ENCODE measurements at regions of chr6 and their contacts with region 1.

Region 1: DNA sequence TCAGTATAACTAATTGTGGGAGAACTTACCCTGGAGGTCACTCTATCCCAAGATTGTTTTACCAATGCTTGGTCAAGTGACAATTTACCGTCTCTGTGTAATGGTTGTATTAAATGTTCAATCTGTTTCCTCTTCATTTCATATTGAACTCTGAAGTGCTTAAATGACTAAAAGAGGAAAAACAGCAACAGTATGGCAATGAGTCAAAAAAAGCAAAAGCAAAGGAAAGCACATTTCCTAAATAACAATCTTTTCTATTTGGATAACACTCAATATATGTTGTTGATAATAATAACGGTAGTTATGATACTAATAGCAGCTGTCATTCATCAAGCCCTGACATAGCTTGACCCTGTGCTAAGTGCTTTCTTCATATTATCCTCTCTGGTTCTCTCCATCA is 152.4 kb downstream of the SYNE1 start:
- DNase-seq: no peak
- ATAC-seq: no peak
- H3K4me3 ChIP-seq: no peak overlapping the region
- H3K27ac ChIP-seq: no peak overlapping the region
- H3K4me1 ChIP-seq: no peaks in the 10 kb centered on the region
- H3K27me3 ChIP-seq: no peaks in the 10 kb centered on the region
- CTCF ChIP-seq: no peak
- POLR2A ChIP-seq: no peak
- RAD21 ChIP-seq: no peak

Region 2: GRCh38 chr6:152642989-152643388 is 158.2 kb after region 1 on chr6:
- CTCF ChIA-PET with region 1: interaction called, 20 read pairs
- POLR2A ChIA-PET with region 1: no interaction called
- dilution Hi-C with region 1: no loop called
- in situ Hi-C with region 1: no loop called
- intact Hi-C with region 1: loop called (anchors 1 kb)
- DNase-seq: peak; percentile 55
- ATAC-seq: peak; percentile 98
- H3K4me3 ChIP-seq: no peak overlapping the region
- H3K27ac ChIP-seq: no peak overlapping the region
- H3K4me1 ChIP-seq: no peaks in the 10 kb centered on the region; the same call in 1 of the 2 replicates
- H3K27me3 ChIP-seq: no peaks in the 10 kb centered on the region
- CTCF ChIP-seq: peak; percentile 53
- POLR2A ChIP-seq: no peak
- RAD21 ChIP-seq: peak; percentile 61

Region 3: GRCh38 chr6:152669895-152670294 is 185.1 kb after region 1 on chr6:
- CTCF ChIA-PET with region 1: interaction called, 6 read pairs
- POLR2A ChIA-PET with region 1: no interaction called
- dilution Hi-C with region 1: no loop called
- in situ Hi-C with region 1: loop called (anchors 10 kb)
- intact Hi-C with region 1: loop called (anchors 1 kb)
- DNase-seq: peak; percentile 60
- ATAC-seq: peak; percentile 79
- H3K4me3 ChIP-seq: no peak overlapping the region
- H3K27ac ChIP-seq: no peak overlapping the region
- H3K4me1 ChIP-seq: peaks cover 2% of the 10 kb centered on the region; the same call in 1 of the 2 replicates
- H3K27me3 ChIP-seq: no peaks in the 10 kb centered on the region
- CTCF ChIP-seq: peak; percentile 65
- POLR2A ChIP-seq: no peak
- RAD21 ChIP-seq: peak; percentile 71

Region 4: GRCh38 chr6:152723398-152723797 is 238.6 kb after region 1 on chr6:
- CTCF ChIA-PET with region 1: no interaction called
- POLR2A ChIA-PET with region 1: no interaction called
- dilution Hi-C with region 1: no loop called
- in situ Hi-C with region 1: no loop called
- intact Hi-C with region 1: no loop called
- DNase-seq: peak; percentile 85
- ATAC-seq: peak; percentile 90
- H3K4me3 ChIP-seq: no peak overlapping the region
- H3K27ac ChIP-seq: no peak overlapping the region
- H3K4me1 ChIP-seq: peaks cover 1% of the 10 kb centered on the region; the same call in 1 of the 2 replicates
- H3K27me3 ChIP-seq: no peaks in the 10 kb centered on the region
- CTCF ChIP-seq: no peak
- POLR2A ChIP-seq: no peak
- RAD21 ChIP-seq: no peak